CD4-positive, alpha-beta T cell (primary cell): ENCODE measurements at regions of chr11 and their contacts with region 1.

Region 1: DNA sequence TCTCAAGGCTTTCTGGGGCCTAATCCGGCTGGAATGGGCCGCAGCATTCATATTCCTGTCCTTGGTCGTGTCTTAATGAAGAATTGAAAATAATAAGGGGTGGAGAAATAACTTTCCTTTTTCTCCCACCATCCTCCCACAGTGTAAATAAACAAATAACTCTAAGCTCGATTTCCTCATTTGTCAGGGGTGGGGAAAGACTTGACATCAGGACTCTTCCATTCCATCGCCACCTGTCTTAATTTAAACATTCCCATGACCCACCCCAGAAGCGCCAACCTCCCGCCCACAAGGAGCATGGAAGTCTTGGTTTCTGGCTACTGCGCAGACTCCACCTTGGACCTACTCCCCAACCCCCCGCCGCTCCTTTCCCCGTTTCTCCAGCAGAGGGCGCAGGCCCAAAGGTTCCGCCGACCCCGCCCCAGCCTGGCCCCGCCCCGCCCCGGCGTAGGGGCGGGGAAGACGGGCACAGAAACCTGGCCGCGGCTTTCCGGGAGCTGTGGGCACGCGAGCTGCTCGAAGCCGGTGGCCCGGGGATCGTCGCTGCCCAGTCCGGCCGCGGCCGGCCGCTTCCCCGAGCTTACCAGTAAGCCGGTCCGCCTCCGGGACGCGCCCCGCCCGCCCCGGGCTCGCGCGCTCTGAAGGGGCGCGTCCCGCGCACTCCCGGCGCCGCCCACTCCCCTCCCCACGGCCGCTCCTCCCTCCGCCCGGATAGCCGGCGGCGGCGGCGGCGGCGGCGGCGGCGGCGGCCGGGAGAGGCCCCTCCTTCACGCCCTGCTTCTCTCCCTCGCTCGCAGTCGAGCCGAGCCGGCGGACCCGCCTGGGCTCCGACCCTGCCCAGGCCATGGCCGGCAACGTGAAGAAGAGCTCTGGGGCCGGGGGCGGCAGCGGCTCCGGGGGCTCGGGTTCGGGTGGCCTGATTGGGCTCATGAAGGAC is at the start of gene CBL:
- DNase-seq: peak; percentile 94 to 99 (median 96)
- ATAC-seq: peak; percentile 88
- H3K4me3 ChIP-seq: peak within 1 kb of the TSS; percentile 95
- H3K4me3 Mint-ChIP-seq: peak within 1 kb of the TSS; percentile 96
- H3K27ac ChIP-seq: peak within 1 kb of the TSS; percentile 76 to 90
- H3K27ac Mint-ChIP-seq: peak within 1 kb of the TSS; percentile 88
- H3K4me1 ChIP-seq: peaks cover 31% of the 10 kb centered on the region
- H3K4me1 Mint-ChIP-seq: peaks cover 43% of the 10 kb centered on the region
- H3K27me3 ChIP-seq: no peaks in the 10 kb centered on the region
- H3K27me3 Mint-ChIP-seq: no peaks in the 10 kb centered on the region
- CTCF ChIP-seq: peak; percentile 80
- total RNA-seq, gene CBL: 19.5 to 20.8 TPM

Region 2: DNA sequence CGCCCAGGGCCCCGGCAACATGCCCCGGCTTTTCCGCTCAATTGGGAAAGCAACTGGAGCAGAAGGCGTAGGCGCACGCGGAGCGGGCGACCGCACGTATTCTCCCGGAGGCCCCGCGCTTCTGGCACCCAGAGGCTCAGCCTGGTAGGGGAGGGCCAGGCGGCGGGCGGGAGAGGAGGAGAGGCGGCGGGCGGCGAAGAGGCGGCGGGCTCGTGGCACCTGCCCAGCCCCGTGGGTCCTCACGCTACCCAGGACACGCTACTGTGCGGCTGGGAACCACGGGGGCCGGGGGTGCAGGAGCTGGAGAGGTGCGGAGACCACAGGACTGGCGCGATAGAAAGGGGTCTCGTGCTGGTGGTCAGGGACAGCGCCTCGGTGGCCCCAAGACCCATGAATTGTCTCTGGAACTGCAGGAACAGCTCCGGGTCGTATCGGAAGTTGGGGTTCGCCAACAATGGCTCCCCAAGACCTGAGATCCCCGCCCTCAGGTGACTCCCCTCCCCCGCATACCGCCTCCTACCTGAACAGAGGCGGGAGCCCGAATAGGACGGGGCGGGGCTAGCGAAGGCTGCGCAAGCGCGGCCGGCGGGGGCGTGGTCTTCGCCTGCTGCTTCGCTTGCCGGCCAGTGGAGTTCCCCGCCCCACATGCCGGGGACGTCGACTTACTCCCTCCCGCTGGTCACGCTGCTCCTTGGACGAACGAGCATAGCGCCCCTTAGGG is 175.4 kb before region 1 on chr11 and contains the start of gene SLC37A4:
- CTCF ChIA-PET with region 1: no interaction called
- POLR2A ChIA-PET with region 1: no interaction called
- intact Hi-C with region 1: no loop called
- DNase-seq: peak; percentile 96 to 100 (median 99)
- ATAC-seq: peak; percentile 95
- H3K4me3 ChIP-seq: peak within 1 kb of the TSS; percentile 91
- H3K4me3 Mint-ChIP-seq: peak within 1 kb of the TSS; percentile 96
- H3K27ac ChIP-seq: peak within 1 kb of the TSS; percentile 73 to 74
- H3K27ac Mint-ChIP-seq: peak within 1 kb of the TSS; percentile 92
- H3K4me1 ChIP-seq: peaks cover 29% of the 10 kb centered on the region
- H3K4me1 Mint-ChIP-seq: peaks cover 22% of the 10 kb centered on the region
- H3K27me3 ChIP-seq: no peaks in the 10 kb centered on the region
- H3K27me3 Mint-ChIP-seq: no peaks in the 10 kb centered on the region
- CTCF ChIP-seq: peak; percentile 75
- total RNA-seq, gene SLC37A4: 5.2 to 6.6 TPM

Region 3: DNA sequence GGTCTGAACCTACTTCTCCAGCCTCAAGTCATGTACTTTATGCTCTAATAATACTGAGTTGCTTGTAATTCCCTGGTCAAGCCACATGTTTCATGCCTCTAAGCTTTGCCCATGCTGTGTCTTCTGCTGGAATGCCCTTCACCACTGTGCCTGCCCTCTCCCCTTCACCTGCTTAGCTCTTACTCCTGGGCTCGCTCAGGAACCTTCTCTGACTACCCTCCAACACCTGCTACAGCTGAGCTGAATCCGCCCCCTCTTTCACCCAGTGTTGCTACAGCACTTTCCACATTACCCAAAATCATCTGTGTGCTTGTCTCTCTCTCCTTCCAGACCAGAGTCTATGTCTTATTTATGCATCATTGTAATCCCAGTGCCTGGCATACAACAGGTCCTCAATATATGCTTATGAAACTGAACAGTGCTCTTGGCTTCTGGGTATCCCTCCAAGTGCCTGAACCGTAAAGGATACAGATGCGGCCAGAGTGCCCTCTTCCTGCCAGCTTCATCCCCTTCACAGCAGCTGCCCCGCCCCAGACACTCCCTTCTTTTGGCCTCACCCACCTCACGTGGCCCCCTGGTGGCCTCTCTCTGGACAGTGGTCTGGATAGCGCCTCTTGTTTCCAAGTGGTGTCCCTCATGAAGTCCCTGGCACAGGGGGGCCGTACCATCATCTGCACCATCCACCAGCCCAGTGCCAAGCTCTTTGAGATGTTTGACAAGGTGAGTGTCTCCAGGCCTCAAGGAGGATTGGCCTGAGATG is 49.9 kb before region 1 on chr11:
- CTCF ChIA-PET with region 1: no interaction called
- POLR2A ChIA-PET with region 1: no interaction called
- intact Hi-C with region 1: no loop called
- DNase-seq: peak in 2 of 14 experiments; percentile 15 to 20
- ATAC-seq: no peak
- H3K4me3 ChIP-seq: no peak overlapping the region
- H3K4me3 Mint-ChIP-seq: no peak overlapping the region
- H3K27ac ChIP-seq: no peak overlapping the region
- H3K27ac Mint-ChIP-seq: no peak overlapping the region
- H3K4me1 ChIP-seq: no peaks in the 10 kb centered on the region
- H3K4me1 Mint-ChIP-seq: peaks cover 4% of the 10 kb centered on the region
- H3K27me3 ChIP-seq: peaks cover 0 to 6% of the 10 kb centered on the region in 2 experiments
- H3K27me3 Mint-ChIP-seq: peaks cover 17% of the 10 kb centered on the region
- CTCF ChIP-seq: no peak

Region 4: DNA sequence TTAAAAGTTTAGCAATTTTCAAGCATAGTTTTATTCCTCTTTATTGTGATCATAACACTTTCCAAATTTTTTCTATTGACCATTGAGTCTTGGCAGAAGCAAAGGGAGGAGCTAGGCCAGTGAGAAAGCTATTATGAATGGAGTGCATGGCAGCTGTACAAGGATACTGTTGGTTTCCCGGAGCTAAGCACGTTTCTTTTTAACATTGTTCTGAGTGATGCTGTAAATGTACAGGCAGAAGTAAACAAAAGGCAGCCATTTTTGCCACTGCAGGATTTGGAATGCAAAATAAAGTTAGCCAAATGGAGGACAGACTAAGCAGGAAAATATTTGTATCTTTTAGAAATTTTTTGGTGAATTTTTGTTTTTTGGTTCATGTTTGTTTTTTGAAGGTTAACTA is 16.5 kb after region 1 on chr11:
- CTCF ChIA-PET with region 1: interaction called, 5 read pairs
- POLR2A ChIA-PET with region 1: interaction called, 10 read pairs
- intact Hi-C with region 1: no loop called
- DNase-seq: no peak
- ATAC-seq: peak; percentile 34
- H3K4me3 ChIP-seq: no peak overlapping the region
- H3K4me3 Mint-ChIP-seq: no peak overlapping the region
- H3K27ac ChIP-seq: no peak overlapping the region
- H3K27ac Mint-ChIP-seq: peak overlapping the region; percentile 75
- H3K4me1 ChIP-seq: peaks cover 38% of the 10 kb centered on the region
- H3K4me1 Mint-ChIP-seq: peaks cover 71% of the 10 kb centered on the region
- H3K27me3 ChIP-seq: no peaks in the 10 kb centered on the region
- H3K27me3 Mint-ChIP-seq: no peaks in the 10 kb centered on the region
- CTCF ChIP-seq: no peak

Region 5: DNA sequence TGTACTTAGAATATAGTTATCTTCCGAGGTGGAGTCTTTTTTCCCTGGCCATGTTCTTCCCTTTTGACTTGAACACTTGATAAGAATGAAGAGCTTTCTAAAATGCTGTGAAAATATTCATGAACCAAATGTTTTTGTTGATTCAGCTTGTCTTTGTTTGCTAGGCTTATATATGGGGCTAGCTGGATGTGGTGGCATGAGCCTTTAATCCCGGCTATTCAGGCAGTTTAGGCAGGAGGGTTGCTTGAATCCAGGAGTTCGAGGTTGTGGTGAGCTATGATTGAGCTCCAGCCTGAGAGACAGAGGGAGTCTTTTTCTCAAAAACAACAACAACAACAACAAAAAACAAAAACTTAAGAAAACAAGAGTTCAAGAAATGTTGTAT is 23.4 kb after region 1 on chr11:
- CTCF ChIA-PET with region 1: interaction called, 5 read pairs
- POLR2A ChIA-PET with region 1: interaction called, 18 read pairs
- intact Hi-C with region 1: no loop called
- DNase-seq: no peak
- ATAC-seq: no peak
- H3K4me3 ChIP-seq: no peak overlapping the region
- H3K4me3 Mint-ChIP-seq: peak overlapping the region; percentile 49
- H3K27ac ChIP-seq: no peak overlapping the region
- H3K27ac Mint-ChIP-seq: peak overlapping the region; percentile 81
- H3K4me1 ChIP-seq: peaks cover 28% of the 10 kb centered on the region
- H3K4me1 Mint-ChIP-seq: peaks cover 67% of the 10 kb centered on the region
- H3K27me3 ChIP-seq: no peaks in the 10 kb centered on the region
- H3K27me3 Mint-ChIP-seq: no peaks in the 10 kb centered on the region
- CTCF ChIP-seq: no peak

Region 6: GRCh38 chr11:119236490-119236889 is 30.6 kb after region 1 on chr11:
- CTCF ChIA-PET with region 1: interaction called, 10 read pairs
- POLR2A ChIA-PET with region 1: interaction called, 18 read pairs
- intact Hi-C with region 1: loop called (anchors 5 kb)
- DNase-seq: no peak
- ATAC-seq: no peak
- H3K4me3 ChIP-seq: no peak overlapping the region
- H3K4me3 Mint-ChIP-seq: no peak overlapping the region
- H3K27ac ChIP-seq: no peak overlapping the region
- H3K27ac Mint-ChIP-seq: peak overlapping the region; percentile 10
- H3K4me1 ChIP-seq: peaks cover 16% of the 10 kb centered on the region
- H3K4me1 Mint-ChIP-seq: peaks cover 64% of the 10 kb centered on the region
- H3K27me3 ChIP-seq: no peaks in the 10 kb centered on the region
- H3K27me3 Mint-ChIP-seq: no peaks in the 10 kb centered on the region
- CTCF ChIP-seq: no peak

Region 7: DNA sequence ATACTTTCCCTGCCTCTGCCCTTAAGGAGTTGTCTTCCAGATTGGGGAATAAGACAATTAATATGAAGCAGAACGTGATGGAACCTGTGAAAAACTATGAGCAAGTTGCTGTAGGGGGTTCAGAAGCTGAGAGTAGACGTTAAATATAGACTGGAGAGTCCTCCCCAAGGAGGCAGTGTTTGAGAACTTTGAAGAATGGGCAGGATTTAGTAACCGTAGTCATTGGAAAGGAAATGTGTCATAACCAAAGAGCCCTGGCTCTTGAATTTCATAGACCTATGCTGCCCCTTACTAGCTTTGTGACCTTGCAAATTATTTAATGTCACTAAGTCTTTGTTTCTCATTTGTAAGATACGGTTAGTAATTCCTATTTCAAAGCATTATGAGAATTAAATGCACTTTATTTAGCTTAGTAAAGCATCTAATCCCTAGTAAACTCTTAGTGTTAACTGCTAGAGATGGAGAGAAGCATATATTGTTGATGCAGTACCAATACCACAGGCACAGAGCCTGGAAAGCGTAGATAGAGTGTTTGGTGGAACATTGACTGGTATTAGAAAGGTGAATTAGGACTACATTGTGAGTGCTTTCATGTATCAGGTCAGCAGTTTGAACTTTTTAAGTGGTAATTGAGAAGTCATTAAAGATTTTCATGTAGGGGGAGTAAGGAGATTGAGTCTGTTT is 57.0 kb after region 1 on chr11:
- CTCF ChIA-PET with region 1: interaction called, 7 read pairs
- POLR2A ChIA-PET with region 1: interaction called, 23 read pairs
- intact Hi-C with region 1: loop called in 1 of 2 experiments (anchors 1 kb)
- DNase-seq: peak in 4 of 14 experiments; percentile 14 to 61 (median 54)
- ATAC-seq: peak; percentile 34
- H3K4me3 ChIP-seq: no peak overlapping the region
- H3K4me3 Mint-ChIP-seq: no peak overlapping the region
- H3K27ac ChIP-seq: peak overlapping the region; percentile 44 to 63
- H3K27ac Mint-ChIP-seq: no peak overlapping the region
- H3K4me1 ChIP-seq: peaks cover 53% of the 10 kb centered on the region
- H3K4me1 Mint-ChIP-seq: peaks cover 50% of the 10 kb centered on the region
- H3K27me3 ChIP-seq: no peaks in the 10 kb centered on the region
- H3K27me3 Mint-ChIP-seq: no peaks in the 10 kb centered on the region
- CTCF ChIP-seq: no peak

Region 8: GRCh38 chr11:119284344-119285157 is 78.7 kb after region 1 on chr11:
- CTCF ChIA-PET with region 1: interaction called, 49 read pairs
- POLR2A ChIA-PET with region 1: interaction called, 50 read pairs
- intact Hi-C with region 1: loop called (anchors 1 kb)
- DNase-seq: peak in 4 of 14 experiments; percentile 32 to 77 (median 74)
- ATAC-seq: peak; percentile 97
- H3K4me3 ChIP-seq: no peak overlapping the region
- H3K4me3 Mint-ChIP-seq: no peak overlapping the region
- H3K27ac ChIP-seq: no peak overlapping the region
- H3K27ac Mint-ChIP-seq: peak overlapping the region; percentile 34
- H3K4me1 ChIP-seq: peaks cover 11% of the 10 kb centered on the region
- H3K4me1 Mint-ChIP-seq: peaks cover 40% of the 10 kb centered on the region
- H3K27me3 ChIP-seq: no peaks in the 10 kb centered on the region
- H3K27me3 Mint-ChIP-seq: no peaks in the 10 kb centered on the region
- CTCF ChIP-seq: peak; percentile 80

Region 9: GRCh38 chr11:119323538-119324033 is 117.7 kb after region 1 on chr11:
- CTCF ChIA-PET with region 1: interaction called, 4 read pairs
- POLR2A ChIA-PET with region 1: interaction called, 27 read pairs
- intact Hi-C with region 1: loop called (anchors 1 to 2 kb)
- DNase-seq: peak; percentile 68 to 89 (median 80)
- ATAC-seq: peak; percentile 33
- H3K4me3 ChIP-seq: no peak overlapping the region
- H3K4me3 Mint-ChIP-seq: peak overlapping the region; percentile 69
- H3K27ac ChIP-seq: no peak overlapping the region
- H3K27ac Mint-ChIP-seq: no peak overlapping the region
- H3K4me1 ChIP-seq: peaks cover 43% of the 10 kb centered on the region
- H3K4me1 Mint-ChIP-seq: peaks cover 27% of the 10 kb centered on the region
- H3K27me3 ChIP-seq: peaks cover 1 to 5% of the 10 kb centered on the region in 2 experiments
- H3K27me3 Mint-ChIP-seq: peaks cover 11% of the 10 kb centered on the region
- CTCF ChIP-seq: peak; percentile 86

Region 10: GRCh38 chr11:120792306-120792705 is 1586.5 kb after region 1 on chr11:
- CTCF ChIA-PET with region 1: no interaction called
- POLR2A ChIA-PET with region 1: no interaction called
- intact Hi-C with region 1: no loop called
- DNase-seq: no peak
- ATAC-seq: no peak
- H3K4me3 ChIP-seq: no peak overlapping the region
- H3K4me3 Mint-ChIP-seq: no peak overlapping the region
- H3K27ac ChIP-seq: no peak overlapping the region
- H3K27ac Mint-ChIP-seq: no peak overlapping the region
- H3K4me1 ChIP-seq: no peaks in the 10 kb centered on the region
- H3K4me1 Mint-ChIP-seq: no peaks in the 10 kb centered on the region
- H3K27me3 ChIP-seq: peaks cover 7% of the 10 kb centered on the region in 2 experiments
- H3K27me3 Mint-ChIP-seq: peaks cover 12% of the 10 kb centered on the region
- CTCF ChIP-seq: no peak